Prostate gland (tissue), 2 donors: ENCODE measurements at regions of chr12 and their contacts with region 1.

Region 1: GRCh38 chr12:50055831-50056638 is 1.4 kb upstream of the ASIC1 start:
- DNase-seq: peak; percentile 20
- H3K4me3 ChIP-seq: no peak overlapping the region
- H3K27ac ChIP-seq: no peak overlapping the region
- H3K4me1 ChIP-seq: no peaks in the 10 kb centered on the region
- H3K27me3 ChIP-seq: no peaks in the 10 kb centered on the region
- CTCF ChIP-seq: peak; percentile 74 to 91 (median 79)
- POLR2A ChIP-seq: no peak

Region 2: GRCh38 chr12:49866859-49867579 is 189.0 kb before region 1 on chr12:
- intact Hi-C with region 1: loop called (anchors 5 kb)
- DNase-seq: peak; percentile 72
- H3K4me3 ChIP-seq: no peak overlapping the region
- H3K27ac ChIP-seq: no peak overlapping the region
- H3K4me1 ChIP-seq: peaks cover 8% of the 10 kb centered on the region
- H3K27me3 ChIP-seq: no peaks in the 10 kb centered on the region
- CTCF ChIP-seq: peak; percentile 93 to 96 (median 95)
- POLR2A ChIP-seq: no peak